ENCODE measurements at regions of chr5 and their contacts with region 1.

Region 1: GRCh38 chr5:88690409-88691229 is 192.4 kb downstream of the MEF2C start:
- DNase-seq: peak; percentile 86
- ATAC-seq: peak; percentile 94
- H3K4me3 ChIP-seq: peak overlapping the region in 3 of 5 experiments; percentile 22 to 43 (median 27)
- H3K4me3 Mint-ChIP-seq: peak overlapping the region; percentile 90
- H3K27ac ChIP-seq: no peak overlapping the region
- H3K27ac Mint-ChIP-seq: peak overlapping the region; percentile 93
- H3K4me1 ChIP-seq: peaks cover 46 to 48% of the 10 kb centered on the region in 2 donors
- H3K4me1 Mint-ChIP-seq: peaks cover 31% of the 10 kb centered on the region
- H3K27me3 ChIP-seq: peaks cover 3 to 99% (median 86%) of the 10 kb centered on the region in 4 experiments
- H3K27me3 Mint-ChIP-seq: peaks cover 83% of the 10 kb centered on the region
- CTCF ChIP-seq: peak; percentile 97

Region 2: DNA sequence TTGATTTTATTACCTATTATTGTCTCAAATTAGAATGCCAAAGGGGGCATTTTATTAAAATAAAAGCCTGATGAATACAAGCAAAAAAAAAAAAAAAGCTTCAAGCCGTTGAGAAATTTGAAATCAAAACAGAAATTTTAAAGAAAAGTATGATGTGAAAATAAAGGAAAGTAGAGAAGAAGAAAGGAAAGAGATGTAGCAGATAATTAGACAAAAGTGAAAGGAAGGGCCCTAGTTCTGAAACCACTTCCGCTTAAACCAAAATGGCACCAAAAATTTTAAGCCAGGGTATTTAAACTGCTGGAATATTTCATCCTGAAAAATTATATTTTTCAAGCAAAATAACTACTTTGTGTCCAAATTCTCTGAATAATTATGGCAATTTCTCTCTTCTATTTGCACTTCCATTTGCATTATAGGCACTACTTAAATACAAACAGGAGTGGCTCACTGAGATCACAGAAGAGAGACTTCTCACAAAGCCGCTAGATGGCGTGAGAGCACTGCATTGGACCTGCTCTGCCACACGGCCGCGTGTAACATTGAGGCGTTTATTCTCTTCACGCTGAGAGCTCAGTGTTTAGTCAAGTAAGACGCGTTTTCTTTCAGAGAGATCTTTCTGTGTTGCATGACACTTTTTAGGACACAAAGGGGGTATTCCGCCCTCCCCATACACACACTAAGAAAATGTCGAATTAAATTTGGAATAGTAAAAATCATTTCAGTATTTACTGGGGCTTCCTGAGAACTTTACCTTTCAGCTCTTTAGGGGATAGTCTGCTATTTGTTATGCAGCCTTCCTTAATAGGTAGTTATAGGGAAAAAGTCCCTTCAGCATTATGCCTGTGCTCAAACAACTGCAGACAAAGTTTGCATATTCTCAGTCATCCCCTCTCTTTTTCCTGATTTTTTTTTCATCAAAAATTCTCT is 909.5 kb before region 1 on chr5:
- CTCF ChIA-PET with region 1: interaction called, 99 read pairs
- POLR2A ChIA-PET with region 1: no interaction called
- intact Hi-C with region 1: loop called (anchors 1 kb)
- DNase-seq: peak; percentile 82
- ATAC-seq: peak; percentile 98
- H3K4me3 ChIP-seq: no peak overlapping the region
- H3K4me3 Mint-ChIP-seq: no peak overlapping the region
- H3K27ac ChIP-seq: no peak overlapping the region
- H3K27ac Mint-ChIP-seq: no peak overlapping the region
- H3K4me1 ChIP-seq: peaks cover 0 to 3% of the 10 kb centered on the region in 2 donors
- H3K4me1 Mint-ChIP-seq: peaks cover 3% of the 10 kb centered on the region
- H3K27me3 ChIP-seq: peaks cover 0 to 11% (median 3%) of the 10 kb centered on the region in 4 experiments
- H3K27me3 Mint-ChIP-seq: peaks cover 17% of the 10 kb centered on the region
- CTCF ChIP-seq: peak; percentile 98

Region 3: GRCh38 chr5:88140856-88141752 is 549.5 kb before region 1 on chr5:
- CTCF ChIA-PET with region 1: no interaction called
- POLR2A ChIA-PET with region 1: no interaction called
- intact Hi-C with region 1: loop called (anchors 5 kb)
- DNase-seq: peak; percentile 44
- ATAC-seq: peak; percentile 36
- H3K4me3 ChIP-seq: peak overlapping the region in 3 of 5 experiments; percentile 5 to 35 (median 8)
- H3K4me3 Mint-ChIP-seq: no peak overlapping the region
- H3K27ac ChIP-seq: no peak overlapping the region
- H3K27ac Mint-ChIP-seq: no peak overlapping the region
- H3K4me1 ChIP-seq: peaks cover 51 to 54% of the 10 kb centered on the region in 2 donors
- H3K4me1 Mint-ChIP-seq: peaks cover 8% of the 10 kb centered on the region
- H3K27me3 ChIP-seq: peaks cover 2 to 68% (median 58%) of the 10 kb centered on the region in 4 experiments
- H3K27me3 Mint-ChIP-seq: peaks cover 36% of the 10 kb centered on the region
- CTCF ChIP-seq: peak; percentile 29

Region 4: DNA sequence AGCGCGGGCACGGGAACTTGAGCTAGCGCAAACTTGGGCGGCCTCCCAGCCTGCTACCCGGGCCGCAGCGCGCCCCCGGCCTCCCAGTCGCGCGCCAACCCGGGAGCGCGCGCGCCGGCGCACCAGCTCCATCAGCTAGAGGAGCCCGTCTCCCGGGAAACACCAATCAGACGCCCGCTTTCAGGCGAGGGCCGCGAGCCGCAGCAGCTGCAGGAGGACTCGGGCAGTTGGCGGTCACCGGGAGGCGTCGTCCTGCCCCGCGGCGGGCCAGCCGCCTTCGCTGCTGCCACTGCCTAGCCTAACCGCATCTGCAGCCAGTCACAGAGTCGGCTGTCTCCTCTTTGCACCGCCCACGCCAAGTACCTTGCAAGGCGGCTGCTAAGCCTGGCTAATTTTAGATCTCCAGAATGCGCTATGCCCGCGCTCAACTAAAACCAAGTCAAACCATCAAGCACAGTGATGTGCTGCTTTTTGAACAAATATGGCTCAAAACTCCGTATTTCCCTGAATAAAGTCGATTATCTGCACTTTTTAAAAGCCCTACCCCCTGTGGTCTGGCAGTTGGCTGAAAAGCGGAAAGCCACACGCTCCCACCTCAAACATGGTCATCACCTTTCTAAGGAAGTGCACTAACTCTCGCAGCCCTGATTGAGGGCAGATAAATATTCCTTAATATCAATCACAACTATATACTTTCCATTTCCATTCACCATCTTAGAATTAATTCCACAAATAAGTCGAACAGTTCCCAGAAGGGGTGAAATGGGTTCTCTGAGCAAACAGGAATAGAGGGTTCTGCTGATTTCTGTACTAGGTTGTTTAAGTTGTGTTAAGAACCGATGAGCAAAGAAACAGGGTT is 29.4 kb before region 1 on chr5:
- CTCF ChIA-PET with region 1: interaction called, 27 read pairs
- POLR2A ChIA-PET with region 1: no interaction called
- intact Hi-C with region 1: loop called (anchors 2 kb)
- DNase-seq: peak; percentile 51
- ATAC-seq: peak; percentile 31
- H3K4me3 ChIP-seq: peak overlapping the region in 3 of 5 experiments; percentile 23 to 35 (median 26)
- H3K4me3 Mint-ChIP-seq: peak overlapping the region; percentile 80
- H3K27ac ChIP-seq: no peak overlapping the region
- H3K27ac Mint-ChIP-seq: peak overlapping the region; percentile 38
- H3K4me1 ChIP-seq: peaks cover 24 to 30% of the 10 kb centered on the region in 2 donors
- H3K4me1 Mint-ChIP-seq: peaks cover 21% of the 10 kb centered on the region
- H3K27me3 ChIP-seq: peaks cover 8 to 81% (median 63%) of the 10 kb centered on the region in 4 experiments
- H3K27me3 Mint-ChIP-seq: peaks cover 79% of the 10 kb centered on the region
- CTCF ChIP-seq: no peak

Region 5: GRCh38 chr5:88666761-88667495 is 23.7 kb before region 1 on chr5:
- CTCF ChIA-PET with region 1: interaction called, 27 read pairs
- POLR2A ChIA-PET with region 1: no interaction called
- intact Hi-C with region 1: no loop called
- DNase-seq: peak; percentile 64
- ATAC-seq: peak; percentile 54
- H3K4me3 ChIP-seq: peak overlapping the region; percentile 41 to 69 (median 56)
- H3K4me3 Mint-ChIP-seq: peak overlapping the region; percentile 89
- H3K27ac ChIP-seq: no peak overlapping the region
- H3K27ac Mint-ChIP-seq: peak overlapping the region; percentile 0
- H3K4me1 ChIP-seq: peaks cover 21 to 39% of the 10 kb centered on the region in 2 donors
- H3K4me1 Mint-ChIP-seq: peaks cover 26% of the 10 kb centered on the region
- H3K27me3 ChIP-seq: peaks cover 6 to 96% (median 77%) of the 10 kb centered on the region in 4 experiments
- H3K27me3 Mint-ChIP-seq: peaks cover 90% of the 10 kb centered on the region
- CTCF ChIP-seq: no peak

Region 6: GRCh38 chr5:90264689-90265544 is 1574.3 kb after region 1 on chr5:
- CTCF ChIA-PET with region 1: interaction called, 14 read pairs
- POLR2A ChIA-PET with region 1: no interaction called
- intact Hi-C with region 1: loop called (anchors 1 kb)
- DNase-seq: peak; percentile 79
- ATAC-seq: peak; percentile 58
- H3K4me3 ChIP-seq: no peak overlapping the region
- H3K4me3 Mint-ChIP-seq: peak overlapping the region; percentile 64
- H3K27ac ChIP-seq: no peak overlapping the region
- H3K27ac Mint-ChIP-seq: no peak overlapping the region
- H3K4me1 ChIP-seq: peaks cover 6 to 7% of the 10 kb centered on the region in 2 donors
- H3K4me1 Mint-ChIP-seq: peaks cover 7% of the 10 kb centered on the region
- H3K27me3 ChIP-seq: no peaks in the 10 kb centered on the region
- H3K27me3 Mint-ChIP-seq: peaks cover 2% of the 10 kb centered on the region
- CTCF ChIP-seq: peak; percentile 98